ENCODE measurements at regions of chr16 and their contacts with region 1.

Region 1: GRCh38 chr16:18839555-18839954 is 38.2 kb upstream of the ARL6IP1 start:
- DNase-seq: no peak
- H3K4me3 Mint-ChIP-seq: no peak overlapping the region
- H3K27ac Mint-ChIP-seq: no peak overlapping the region
- H3K4me1 Mint-ChIP-seq: peaks cover 17% of the 10 kb centered on the region
- H3K27me3 Mint-ChIP-seq: no peaks in the 10 kb centered on the region

Region 2: DNA sequence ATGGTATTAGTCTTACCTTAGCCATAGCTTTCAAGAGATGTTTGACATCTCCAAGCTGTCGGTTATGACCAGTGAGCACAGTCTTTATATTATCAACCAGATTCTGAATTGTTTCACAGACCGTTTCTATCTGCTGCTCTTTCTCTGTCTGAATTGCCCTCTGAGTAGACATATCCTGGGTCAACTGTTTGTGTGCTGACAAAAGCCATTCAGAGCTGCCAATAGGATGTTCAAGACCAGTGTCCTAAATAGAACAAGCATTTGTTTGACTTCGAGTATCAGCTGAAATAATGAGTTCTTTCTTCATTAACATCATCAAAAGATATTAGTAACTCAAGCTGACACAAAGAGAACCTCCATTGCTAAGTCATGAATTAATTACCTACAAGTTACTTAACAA is 23.3 kb before region 1 on chr16:
- intact Hi-C with region 1: no loop called
- DNase-seq: no peak
- H3K4me3 Mint-ChIP-seq: no peak overlapping the region
- H3K27ac Mint-ChIP-seq: no peak overlapping the region
- H3K4me1 Mint-ChIP-seq: peaks cover 12% of the 10 kb centered on the region
- H3K27me3 Mint-ChIP-seq: no peaks in the 10 kb centered on the region

Region 3: GRCh38 chr16:18853694-18854093 is 14.1 kb after region 1 on chr16:
- intact Hi-C with region 1: loop called (anchors 2 kb)
- DNase-seq: no peak
- H3K4me3 Mint-ChIP-seq: no peak overlapping the region
- H3K27ac Mint-ChIP-seq: peak overlapping the region; percentile 41
- H3K4me1 Mint-ChIP-seq: peaks cover 12% of the 10 kb centered on the region
- H3K27me3 Mint-ChIP-seq: no peaks in the 10 kb centered on the region